ENCODE measurements at regions of chr2 and their contacts with region 1.

Region 1: DNA sequence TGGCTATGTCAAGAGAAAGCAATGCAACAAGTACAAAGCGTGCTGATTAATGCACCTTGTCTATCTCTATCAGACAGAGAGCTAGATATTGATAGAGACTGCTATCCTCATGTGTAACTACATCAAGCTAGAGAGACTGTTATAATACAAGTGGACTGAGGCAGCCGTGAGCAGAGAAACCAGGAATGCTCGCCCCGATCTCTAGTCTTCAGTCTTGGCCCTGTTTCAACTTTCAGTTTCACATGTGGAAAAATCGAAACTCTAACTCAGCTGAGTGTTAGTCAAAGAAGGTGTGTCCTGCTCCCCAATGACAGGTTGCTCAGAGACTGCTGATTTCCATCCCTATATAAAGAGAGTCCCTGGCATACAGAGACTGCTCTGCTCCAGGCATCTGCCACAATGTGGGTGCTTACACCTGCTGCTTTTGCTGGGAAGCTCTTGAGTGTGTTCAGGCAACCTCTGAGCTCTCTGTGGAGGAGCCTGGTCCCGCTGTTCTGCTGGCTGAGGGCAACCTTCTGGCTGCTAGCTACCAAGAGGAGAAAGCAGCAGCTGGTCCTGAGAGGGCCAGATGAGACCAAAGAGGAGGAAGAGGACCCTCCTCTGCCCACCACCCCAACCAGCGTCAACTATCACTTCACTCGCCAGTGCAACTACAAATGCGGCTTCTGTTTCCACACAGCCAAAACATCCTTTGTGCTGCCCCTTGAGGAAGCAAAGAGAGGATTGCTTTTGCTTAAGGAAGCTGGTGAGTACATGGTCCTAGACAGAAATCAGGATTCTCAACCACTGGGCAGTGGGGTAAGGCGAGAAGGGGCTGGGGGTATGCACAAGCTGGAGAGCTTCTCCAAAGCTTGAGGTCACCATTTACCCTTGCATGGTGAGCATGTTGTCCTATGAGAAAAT is at the start of gene RSAD2:
- DNase-seq: peak; percentile 57
- H3K4me3 Mint-ChIP-seq: peak within 1 kb of the TSS; percentile 74
- H3K27ac Mint-ChIP-seq: peak within 1 kb of the TSS; percentile 87
- H3K4me1 Mint-ChIP-seq: peaks cover 80% of the 10 kb centered on the region
- H3K27me3 Mint-ChIP-seq: peaks cover 4% of the 10 kb centered on the region

Region 2: GRCh38 chr2:6865346-6866274 is 12.0 kb before region 1 on chr2 and contains the start of gene CMPK2:
- CTCF ChIA-PET with region 1: interaction called, 116 read pairs
- DNase-seq: peak; percentile 95
- H3K4me3 Mint-ChIP-seq: peak within 1 kb of the TSS; percentile 96
- H3K27ac Mint-ChIP-seq: peak within 1 kb of the TSS; percentile 92
- H3K4me1 Mint-ChIP-seq: peaks cover 48% of the 10 kb centered on the region
- H3K27me3 Mint-ChIP-seq: no peaks in the 10 kb centered on the region

Region 3: DNA sequence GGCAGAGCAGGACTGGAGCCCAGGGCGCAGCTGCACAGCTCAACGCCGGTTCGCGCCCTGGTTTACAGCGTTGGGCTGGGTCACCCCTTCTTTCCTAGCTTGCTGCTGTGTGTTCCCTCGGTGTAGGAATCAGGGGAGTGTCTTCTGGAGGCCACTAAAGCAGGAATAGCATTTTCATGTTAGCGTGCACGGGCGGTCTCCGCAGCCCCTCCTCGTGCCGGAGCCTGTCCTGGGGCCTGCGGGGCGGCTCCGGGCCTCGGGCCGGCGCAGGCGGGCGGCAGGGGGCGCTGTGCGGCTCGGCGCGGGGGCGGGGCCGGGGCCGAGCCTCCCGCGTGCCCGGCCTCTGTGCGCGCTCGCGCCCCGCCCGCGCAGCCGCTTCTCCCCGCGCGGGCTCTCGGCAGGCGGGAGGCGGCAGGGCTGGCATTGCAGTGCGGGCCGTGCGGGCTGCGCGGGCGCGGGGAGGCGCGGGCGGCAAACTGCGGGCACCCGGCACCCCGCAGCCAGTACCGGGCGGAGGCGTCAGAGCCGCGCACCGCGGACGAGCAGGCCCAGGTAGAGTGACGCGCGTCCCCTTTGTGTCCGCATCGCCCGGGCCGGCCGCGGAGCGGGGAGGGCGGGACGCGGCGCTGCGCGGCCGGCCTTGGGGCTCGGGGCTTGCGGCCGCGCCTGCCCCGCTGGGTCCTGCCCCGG is 39.6 kb after region 1 on chr2 and contains the start of gene RNF144A:
- CTCF ChIA-PET with region 1: interaction called, 20 read pairs
- DNase-seq: peak; percentile 73
- H3K4me3 Mint-ChIP-seq: peak within 1 kb of the TSS; percentile 77
- H3K27ac Mint-ChIP-seq: peak within 1 kb of the TSS; percentile 86
- H3K4me1 Mint-ChIP-seq: peaks cover 79% of the 10 kb centered on the region
- H3K27me3 Mint-ChIP-seq: peaks cover 8% of the 10 kb centered on the region